Lower leg skin (tissue), 4 donors: ENCODE measurements at regions of chr4 and their contacts with region 1.

Region 1: GRCh38 chr4:1567803-1568581 is 116.1 kb downstream of the FAM53A start:
- DNase-seq: no peak
- H3K4me3 ChIP-seq: no peak overlapping the region
- CTCF ChIP-seq: no peak
- POLR2A ChIP-seq: no peak

Region 2: DNA sequence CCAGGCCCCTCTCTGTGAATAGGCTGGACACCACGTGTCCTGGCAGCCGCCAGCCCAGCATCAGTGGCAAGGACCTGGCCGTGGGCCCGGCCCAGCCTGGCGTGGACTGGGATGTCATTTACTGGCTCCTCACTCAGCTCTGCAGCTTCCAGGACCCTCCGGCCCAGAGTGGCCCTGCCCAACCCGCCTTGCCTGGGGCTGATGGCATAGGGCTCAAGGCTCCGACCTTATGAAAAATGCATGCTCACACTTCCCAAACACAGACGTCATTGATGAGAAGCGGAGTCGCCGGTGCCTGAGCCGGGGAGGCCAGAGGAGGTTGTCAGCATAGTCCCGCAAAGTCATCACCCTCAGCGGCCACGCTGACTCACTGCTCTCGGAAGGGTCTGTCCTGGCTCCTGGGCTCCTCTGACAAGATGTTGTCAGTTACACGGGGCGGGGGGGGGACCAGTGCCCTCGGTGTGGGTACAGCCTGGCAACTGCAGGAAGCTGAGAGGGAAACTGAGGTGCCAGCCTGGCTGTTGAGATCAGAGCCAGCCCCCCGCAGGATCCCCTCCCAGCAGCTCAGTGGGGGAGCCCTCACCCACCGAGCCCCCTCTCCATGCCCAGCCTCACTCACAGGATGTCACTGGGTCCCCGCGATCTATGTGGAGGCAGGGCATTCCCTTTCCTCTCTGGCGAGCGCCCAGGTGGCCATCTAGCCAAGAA is 865.2 kb after region 1 on chr4:
- intact Hi-C with region 1: no loop called
- DNase-seq: no peak
- H3K4me3 ChIP-seq: no peak overlapping the region
- CTCF ChIP-seq: no peak
- POLR2A ChIP-seq: no peak

Region 3: GRCh38 chr4:3384785-3385732 is 1817.1 kb after region 1 on chr4:
- intact Hi-C with region 1: loop called (anchors 5 kb)
- DNase-seq: peak; percentile 78 to 94
- H3K4me3 ChIP-seq: no peak overlapping the region
- CTCF ChIP-seq: no peak
- POLR2A ChIP-seq: no peak